CD4-positive, alpha-beta T cell (primary cell): ENCODE measurements at regions of chr7 and their contacts with region 1.

Region 1: GRCh38 chr7:150974468-150975391 is 3.4 kb downstream of the KCNH2 start:
- DNase-seq: peak; percentile 76 to 93 (median 84)
- ATAC-seq: peak; percentile 69
- H3K4me3 ChIP-seq: peak overlapping the region; percentile 65
- H3K4me3 Mint-ChIP-seq: peak overlapping the region; percentile 90
- H3K27ac ChIP-seq: peak overlapping the region; percentile 62 to 63
- H3K27ac Mint-ChIP-seq: peak overlapping the region; percentile 91
- H3K4me1 ChIP-seq: peaks cover 64% of the 10 kb centered on the region
- H3K4me1 Mint-ChIP-seq: peaks cover 60% of the 10 kb centered on the region
- H3K27me3 ChIP-seq: peaks cover 24 to 30% of the 10 kb centered on the region in 2 experiments
- H3K27me3 Mint-ChIP-seq: peaks cover 25% of the 10 kb centered on the region
- CTCF ChIP-seq: peak; percentile 24

Region 2: GRCh38 chr7:151008511-151009323 is 34.0 kb after region 1 on chr7:
- CTCF ChIA-PET with region 1: no interaction called
- POLR2A ChIA-PET with region 1: interaction called, 20 read pairs
- intact Hi-C with region 1: loop called (anchors 2 to 5 kb)
- DNase-seq: peak; percentile 53 to 88 (median 74)
- ATAC-seq: peak; percentile 18
- H3K4me3 ChIP-seq: peak overlapping the region; percentile 52
- H3K4me3 Mint-ChIP-seq: peak overlapping the region; percentile 87
- H3K27ac ChIP-seq: peak overlapping the region; percentile 74 to 79
- H3K27ac Mint-ChIP-seq: peak overlapping the region; percentile 88
- H3K4me1 ChIP-seq: peaks cover 75% of the 10 kb centered on the region
- H3K4me1 Mint-ChIP-seq: peaks cover 71% of the 10 kb centered on the region
- H3K27me3 ChIP-seq: no peaks in the 10 kb centered on the region
- H3K27me3 Mint-ChIP-seq: no peaks in the 10 kb centered on the region
- CTCF ChIP-seq: peak; percentile 67

Region 3: GRCh38 chr7:151080522-151081169 is 105.9 kb after region 1 on chr7 and contains the start of gene FASTK:
- CTCF ChIA-PET with region 1: no interaction called
- POLR2A ChIA-PET with region 1: interaction called, 3 read pairs
- intact Hi-C with region 1: loop called in 1 of 2 experiments (anchors 10 kb)
- DNase-seq: peak; percentile 73 to 95 (median 85)
- ATAC-seq: peak; percentile 63
- H3K4me3 ChIP-seq: peak within 1 kb of the TSS; percentile 98
- H3K4me3 Mint-ChIP-seq: peak within 1 kb of the TSS; percentile 92
- H3K27ac ChIP-seq: peak within 1 kb of the TSS; percentile 77 to 92
- H3K27ac Mint-ChIP-seq: peak within 1 kb of the TSS; percentile 85
- H3K4me1 ChIP-seq: peaks cover 52% of the 10 kb centered on the region
- H3K4me1 Mint-ChIP-seq: peaks cover 45% of the 10 kb centered on the region
- H3K27me3 ChIP-seq: no peaks in the 10 kb centered on the region
- H3K27me3 Mint-ChIP-seq: peaks cover 4% of the 10 kb centered on the region
- CTCF ChIP-seq: no peak
- total RNA-seq, gene FASTK: 82.2 to 84.2 TPM